Activated naive CD4-positive, alpha-beta T cell treated with anti-CD3 and anti-CD28 coated beads for 36 hours (primary cell): ENCODE measurements at regions of chr18 and their contacts with region 1.

Region 1: GRCh38 chr18:62186774-62187542 is at the starts of genes PIGN and RELCH:
- DNase-seq: peak; percentile 97
- H3K4me3 Mint-ChIP-seq: peak within 1 kb of the TSS; percentile 99
- H3K27ac Mint-ChIP-seq: peak within 1 kb of the TSS; percentile 90
- H3K4me1 Mint-ChIP-seq: peaks cover 45% of the 10 kb centered on the region
- H3K27me3 Mint-ChIP-seq: no peaks in the 10 kb centered on the region
- total RNA-seq, gene PIGN: 21.2 to 22.6 TPM
- total RNA-seq, gene RELCH: 15.7 to 16.3 TPM

Region 2: DNA sequence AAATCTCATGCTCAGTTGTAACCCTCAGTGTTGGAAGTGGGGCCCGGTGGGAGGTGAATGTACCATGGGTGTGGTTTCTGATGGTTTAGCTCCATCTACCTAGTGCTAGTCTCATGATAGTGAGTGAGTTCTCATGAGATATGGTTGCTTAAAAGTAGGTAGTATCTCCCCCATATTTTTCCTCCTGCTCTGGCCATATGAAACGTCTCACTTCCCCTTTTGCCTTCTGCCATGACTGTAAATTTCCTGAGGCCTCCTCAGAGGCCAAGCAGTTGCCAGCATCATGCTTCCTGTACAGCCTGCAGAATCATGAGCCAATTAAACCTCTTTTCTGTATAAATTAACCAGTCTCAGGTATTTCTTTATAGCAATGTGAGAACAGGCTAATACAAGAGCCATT is 231.3 kb before region 1 on chr18:
- CTCF ChIA-PET with region 1: no interaction called
- intact Hi-C with region 1: loop called (anchors 2 kb)
- DNase-seq: no peak
- H3K4me3 Mint-ChIP-seq: no peak overlapping the region
- H3K27ac Mint-ChIP-seq: no peak overlapping the region
- H3K4me1 Mint-ChIP-seq: peaks cover 30% of the 10 kb centered on the region
- H3K27me3 Mint-ChIP-seq: peaks cover 2% of the 10 kb centered on the region

Region 3: GRCh38 chr18:61980355-61980754 is 206.6 kb before region 1 on chr18:
- CTCF ChIA-PET with region 1: no interaction called
- intact Hi-C with region 1: no loop called
- DNase-seq: peak; percentile 23
- H3K4me3 Mint-ChIP-seq: no peak overlapping the region
- H3K27ac Mint-ChIP-seq: no peak overlapping the region
- H3K4me1 Mint-ChIP-seq: peaks cover 24% of the 10 kb centered on the region
- H3K27me3 Mint-ChIP-seq: no peaks in the 10 kb centered on the region

Region 4: DNA sequence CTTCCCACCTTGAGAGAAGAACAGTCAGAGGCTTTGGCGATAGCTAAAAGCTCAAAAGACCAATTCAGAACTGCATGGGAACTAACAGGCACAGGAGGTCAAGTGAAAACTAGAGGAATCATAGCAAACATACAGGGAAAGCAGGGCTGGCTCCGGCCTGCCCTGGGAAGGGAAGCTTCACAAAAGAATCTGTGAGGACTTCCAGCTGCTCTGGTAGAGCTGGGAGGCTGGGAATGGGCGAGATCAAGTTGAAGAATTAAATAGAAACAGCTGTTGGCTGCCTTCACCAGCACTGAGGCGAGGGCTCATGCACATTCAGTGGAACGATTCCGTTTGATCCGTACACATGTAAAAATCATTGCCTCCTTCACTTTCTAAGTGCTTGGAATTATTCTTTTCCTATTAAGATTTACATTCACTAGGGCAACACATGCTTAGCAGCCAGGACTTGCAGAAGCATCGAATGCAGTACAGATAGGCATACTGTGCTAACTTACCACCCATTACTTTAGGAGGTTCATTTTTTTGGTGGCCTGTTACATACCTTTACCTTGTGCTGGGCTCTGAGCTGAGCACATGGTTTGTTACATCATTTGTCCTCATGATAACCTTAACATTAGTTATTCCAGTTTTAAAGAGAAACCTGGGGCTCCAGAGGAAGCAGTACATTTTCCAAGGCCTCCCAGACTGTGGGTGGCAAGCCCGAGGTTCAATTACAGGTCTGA is 168.8 kb before region 1 on chr18:
- CTCF ChIA-PET with region 1: no interaction called
- intact Hi-C with region 1: no loop called
- DNase-seq: no peak
- H3K4me3 Mint-ChIP-seq: no peak overlapping the region
- H3K27ac Mint-ChIP-seq: no peak overlapping the region
- H3K4me1 Mint-ChIP-seq: no peaks in the 10 kb centered on the region
- H3K27me3 Mint-ChIP-seq: no peaks in the 10 kb centered on the region

Region 5: DNA sequence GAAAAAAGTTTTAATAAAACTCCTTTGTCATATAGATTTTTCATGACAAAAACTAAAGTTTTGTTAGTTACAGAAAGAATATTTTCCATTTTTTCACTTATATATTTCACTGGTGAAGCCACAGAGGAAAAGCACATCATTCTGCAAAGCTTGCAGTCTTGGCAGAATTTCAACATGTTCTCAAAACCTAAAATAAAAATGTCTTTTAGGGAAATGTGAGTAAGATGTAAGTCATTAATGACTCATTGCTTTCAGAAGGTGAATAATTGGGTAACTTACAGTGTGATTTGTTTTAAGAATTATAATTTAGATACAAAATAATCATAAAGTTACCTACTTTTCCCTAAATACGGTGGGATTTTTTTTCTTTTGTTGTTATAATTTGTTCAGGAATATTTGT is 94.7 kb after region 1 on chr18:
- CTCF ChIA-PET with region 1: interaction called, 4 read pairs
- intact Hi-C with region 1: loop called (anchors 1 kb)
- DNase-seq: no peak
- H3K4me3 Mint-ChIP-seq: no peak overlapping the region
- H3K27ac Mint-ChIP-seq: no peak overlapping the region
- H3K4me1 Mint-ChIP-seq: peaks cover 39% of the 10 kb centered on the region
- H3K27me3 Mint-ChIP-seq: no peaks in the 10 kb centered on the region

Region 6: DNA sequence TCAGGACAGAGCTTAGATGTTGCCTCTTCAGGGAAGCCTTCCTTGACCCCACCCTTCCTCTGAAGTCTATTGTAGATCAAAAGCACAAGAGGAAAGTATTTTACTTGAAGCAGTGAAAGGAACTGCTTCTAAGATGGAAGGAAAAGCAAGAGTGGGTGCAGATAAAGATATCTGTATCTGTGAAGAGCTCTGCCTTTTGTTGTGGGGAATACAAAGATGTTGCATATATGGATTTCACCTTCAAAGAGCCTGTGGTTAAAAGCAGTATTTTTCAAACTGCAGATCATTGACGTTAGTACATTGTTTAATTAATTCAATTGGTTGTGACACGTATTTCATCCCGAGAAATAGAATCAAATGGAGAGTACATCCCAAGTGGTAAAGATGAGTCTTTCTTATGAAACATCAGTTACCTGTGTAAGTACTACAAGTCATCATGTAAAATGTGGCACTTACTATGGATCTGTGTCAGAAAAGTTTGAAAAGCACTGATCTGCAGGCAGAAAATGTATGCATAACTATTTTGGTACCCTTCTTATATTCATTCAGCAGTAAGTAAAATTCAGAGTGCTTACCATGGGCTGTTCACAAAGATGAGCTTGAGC is 113.5 kb after region 1 on chr18:
- CTCF ChIA-PET with region 1: no interaction called
- intact Hi-C with region 1: no loop called
- DNase-seq: no peak
- H3K4me3 Mint-ChIP-seq: no peak overlapping the region
- H3K27ac Mint-ChIP-seq: peak overlapping the region; percentile 5
- H3K4me1 Mint-ChIP-seq: peaks cover 16% of the 10 kb centered on the region
- H3K27me3 Mint-ChIP-seq: no peaks in the 10 kb centered on the region

Region 7: DNA sequence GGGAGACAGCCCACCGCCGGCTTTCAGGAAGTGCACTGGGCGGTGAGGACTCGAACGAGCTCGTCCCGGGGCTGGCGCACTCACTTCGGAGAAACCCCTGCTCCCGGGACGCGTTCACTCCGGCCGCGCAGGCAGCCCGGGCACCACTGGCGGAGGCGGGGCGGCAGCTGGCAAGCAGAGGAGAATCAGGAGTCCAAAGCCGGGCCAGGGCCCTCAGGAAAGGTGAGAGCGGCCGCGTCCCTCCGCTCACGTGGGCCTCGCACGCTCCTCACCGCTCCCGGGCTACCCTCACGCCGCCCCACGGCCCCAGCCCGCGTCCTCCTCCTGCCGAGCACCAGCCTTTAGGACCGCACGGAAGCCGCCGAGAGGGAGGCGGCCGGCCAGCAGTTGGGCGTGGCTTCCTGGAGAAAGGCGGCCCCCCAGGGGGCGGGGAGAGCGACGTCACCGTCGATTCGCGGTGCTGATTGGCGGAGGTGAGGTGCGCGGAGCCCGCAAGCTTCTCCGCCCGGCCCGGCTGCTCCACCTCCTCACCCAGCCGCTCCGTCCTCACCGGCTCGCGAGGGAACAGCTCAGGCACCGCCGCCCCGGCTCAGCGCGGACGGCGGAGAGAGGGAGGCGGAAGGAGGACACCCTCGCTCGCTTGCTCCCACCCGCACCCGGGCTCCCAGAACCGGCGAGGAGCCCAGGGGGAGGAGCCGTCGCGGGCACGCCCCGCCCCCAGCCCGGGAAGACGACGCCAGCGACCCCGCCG is 335.7 kb after region 1 on chr18 and contains the start of gene ZCCHC2:
- CTCF ChIA-PET with region 1: no interaction called
- intact Hi-C with region 1: loop called (anchors 1 kb)
- DNase-seq: peak; percentile 98
- H3K4me3 Mint-ChIP-seq: peak within 1 kb of the TSS; percentile 92
- H3K27ac Mint-ChIP-seq: peak within 1 kb of the TSS; percentile 98
- H3K4me1 Mint-ChIP-seq: peaks cover 14% of the 10 kb centered on the region
- H3K27me3 Mint-ChIP-seq: no peaks in the 10 kb centered on the region
- total RNA-seq, gene ZCCHC2: 22.1 to 23.3 TPM

Region 8: DNA sequence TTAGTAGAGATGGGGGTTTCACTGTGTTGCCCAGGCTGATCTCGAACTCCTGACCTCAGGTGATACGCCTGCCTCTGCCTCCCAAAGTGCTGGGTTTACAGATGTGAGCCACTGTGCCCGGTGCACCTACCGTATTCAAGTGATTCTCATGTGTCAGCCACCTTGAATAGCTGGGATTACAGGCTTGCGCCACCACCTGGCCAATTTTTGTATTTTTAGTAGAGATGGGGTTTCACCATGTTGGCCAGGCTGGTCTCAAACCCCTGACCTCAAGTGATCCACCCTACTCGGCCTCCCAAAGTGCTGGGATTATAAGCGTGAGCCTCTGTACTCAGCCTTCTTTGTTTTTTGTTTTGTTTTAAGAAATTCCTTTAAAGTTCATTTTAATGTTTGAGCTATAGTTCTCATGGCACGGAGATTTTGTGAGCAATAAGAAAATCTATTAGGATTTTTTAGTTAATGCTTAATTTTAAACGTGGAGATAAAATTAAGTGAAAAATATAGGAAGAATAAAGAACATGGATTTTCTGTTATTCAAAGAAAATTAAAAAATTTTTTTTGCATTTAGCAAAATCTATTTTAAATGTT is 771.0 kb after region 1 on chr18:
- CTCF ChIA-PET with region 1: no interaction called
- intact Hi-C with region 1: loop called (anchors 10 kb)
- DNase-seq: peak; percentile 74
- H3K4me3 Mint-ChIP-seq: no peak overlapping the region
- H3K27ac Mint-ChIP-seq: no peak overlapping the region
- H3K4me1 Mint-ChIP-seq: peaks cover 12% of the 10 kb centered on the region
- H3K27me3 Mint-ChIP-seq: no peaks in the 10 kb centered on the region

Region 9: GRCh38 chr18:63367053-63367953 is 1180.3 kb after region 1 on chr18 and contains the start of gene KDSR:
- CTCF ChIA-PET with region 1: no interaction called
- intact Hi-C with region 1: loop called (anchors 1 kb)
- DNase-seq: peak; percentile 85
- H3K4me3 Mint-ChIP-seq: peak within 1 kb of the TSS; percentile 84
- H3K27ac Mint-ChIP-seq: peak within 1 kb of the TSS; percentile 79
- H3K4me1 Mint-ChIP-seq: peaks cover 26% of the 10 kb centered on the region
- H3K27me3 Mint-ChIP-seq: no peaks in the 10 kb centered on the region
- total RNA-seq, gene KDSR: 75.2 to 81.5 TPM